Heart left ventricle (tissue), 16 donors: ENCODE measurements at regions of chr1 and their contacts with region 1.

Region 1: GRCh38 chr1:91885716-91886506 is at the start of gene TGFBR3:
- DNase-seq: peak; percentile 93 to 96 (median 95)
- ATAC-seq: peak; percentile 95 to 97 (median 96)
- H3K4me3 ChIP-seq: peak within 1 kb of the TSS; percentile 70 to 100 (median 92)
- H3K27ac ChIP-seq: peak within 1 kb of the TSS; percentile 85 to 98 (median 94)
- H3K4me1 ChIP-seq: peaks cover 0 to 42% (median 17%) of the 10 kb centered on the region in 12 donors
- H3K27me3 ChIP-seq: peaks cover 0 to 29% (median 0%) of the 10 kb centered on the region in 9 donors
- CTCF ChIP-seq: peak; percentile 26 to 74 (median 54)
- POLR2A ChIP-seq: peak in 1 of 2 donors; percentile 89
- total RNA-seq, gene TGFBR3: 10.3 to 51.8 (median 28.1) TPM

Region 2: GRCh38 chr1:91529856-91530255 is 356.1 kb before region 1 on chr1:
- intact Hi-C with region 1: loop called in 1 of 10 experiments (anchors 10 kb)
- DNase-seq: no peak
- ATAC-seq: peak in 2 of 4 donors; percentile 61 to 67
- H3K4me3 ChIP-seq: no peak overlapping the region
- H3K27ac ChIP-seq: no peak overlapping the region
- H3K4me1 ChIP-seq: peaks cover 0 to 9% (median 0%) of the 10 kb centered on the region in 12 donors
- H3K27me3 ChIP-seq: no peaks in the 10 kb centered on the region
- CTCF ChIP-seq: peak in 7 of 12 donors; percentile 21 to 58 (median 32)
- POLR2A ChIP-seq: no peak

Region 3: DNA sequence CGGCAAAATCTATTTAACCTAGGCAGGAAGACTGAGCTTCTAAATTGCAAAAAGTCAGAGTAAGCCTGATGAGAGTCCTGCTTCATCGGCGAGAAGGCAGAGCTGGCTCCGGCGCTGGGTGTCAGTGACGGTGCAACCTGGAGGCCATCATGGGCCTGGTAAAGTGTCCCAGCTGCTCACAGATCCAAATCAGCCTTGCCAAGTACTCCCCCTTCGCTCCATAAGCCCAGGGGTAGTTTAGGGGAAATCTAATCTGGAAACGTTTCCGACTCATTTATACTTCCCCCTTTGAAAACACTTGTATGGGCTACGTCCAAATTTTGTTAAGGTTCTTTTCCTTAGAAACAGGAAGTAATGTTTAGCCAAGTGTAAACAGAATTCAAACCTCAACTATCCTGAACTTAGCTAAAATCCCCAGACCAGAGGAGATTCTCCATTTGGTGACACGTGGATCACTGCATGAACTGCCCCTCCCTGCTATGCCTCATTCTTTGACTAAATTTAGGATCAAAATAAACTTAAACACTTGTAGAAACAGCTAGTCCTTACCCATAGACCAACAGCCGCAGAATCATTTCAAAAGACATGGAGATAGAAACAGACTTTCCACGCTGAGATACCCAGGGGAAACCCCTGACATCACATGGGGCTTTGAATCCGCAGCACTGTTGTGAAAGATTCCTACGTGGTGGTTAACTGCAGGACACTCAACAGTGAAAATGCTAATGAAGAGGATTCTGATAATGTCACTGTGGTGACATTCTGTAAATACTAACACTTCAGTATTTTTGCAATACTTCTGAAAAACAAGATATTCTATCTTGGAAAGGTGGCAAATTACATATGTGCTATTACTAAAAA is 172.7 kb before region 1 on chr1:
- intact Hi-C with region 1: loop called in 2 of 10 experiments (anchors 10 kb)
- DNase-seq: peak; percentile 48 to 80 (median 67)
- ATAC-seq: peak; percentile 73 to 85 (median 80)
- H3K4me3 ChIP-seq: peak overlapping the region in 7 of 12 donors; percentile 2 to 29 (median 11)
- H3K27ac ChIP-seq: peak overlapping the region; percentile 67 to 87 (median 81)
- H3K4me1 ChIP-seq: peaks cover 0 to 58% (median 22%) of the 10 kb centered on the region in 12 donors
- H3K27me3 ChIP-seq: no peaks in the 10 kb centered on the region
- CTCF ChIP-seq: no peak
- POLR2A ChIP-seq: no peak

Region 4: DNA sequence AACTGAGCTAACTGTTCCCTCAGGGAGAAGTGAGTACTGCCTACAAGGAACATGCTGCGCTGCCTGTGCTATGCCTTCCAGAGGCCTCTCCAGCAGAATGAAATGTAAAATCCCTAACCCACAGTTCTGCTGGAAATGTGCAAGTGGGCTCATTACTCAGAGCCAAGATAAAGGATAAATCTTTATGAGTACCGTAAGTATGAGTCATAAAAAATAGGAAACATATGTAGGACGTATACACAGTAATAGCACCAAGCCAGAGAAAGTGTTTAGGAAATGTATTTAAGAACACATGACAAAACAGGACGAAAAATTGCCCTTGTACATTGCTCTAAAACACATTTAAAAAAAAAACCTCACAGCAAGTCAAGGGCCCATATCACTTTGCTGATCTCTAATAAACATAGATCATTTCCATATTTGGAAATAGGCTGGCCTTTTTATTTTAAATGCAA is 104.5 kb before region 1 on chr1:
- intact Hi-C with region 1: loop called in 1 of 10 experiments (anchors 10 kb)
- DNase-seq: no peak
- ATAC-seq: no peak
- H3K4me3 ChIP-seq: no peak overlapping the region
- H3K27ac ChIP-seq: peak overlapping the region in 10 of 12 donors; percentile 9 to 65 (median 46)
- H3K4me1 ChIP-seq: peaks cover 0 to 63% (median 31%) of the 10 kb centered on the region in 12 donors
- H3K27me3 ChIP-seq: no peaks in the 10 kb centered on the region
- CTCF ChIP-seq: no peak
- POLR2A ChIP-seq: no peak

Region 5: DNA sequence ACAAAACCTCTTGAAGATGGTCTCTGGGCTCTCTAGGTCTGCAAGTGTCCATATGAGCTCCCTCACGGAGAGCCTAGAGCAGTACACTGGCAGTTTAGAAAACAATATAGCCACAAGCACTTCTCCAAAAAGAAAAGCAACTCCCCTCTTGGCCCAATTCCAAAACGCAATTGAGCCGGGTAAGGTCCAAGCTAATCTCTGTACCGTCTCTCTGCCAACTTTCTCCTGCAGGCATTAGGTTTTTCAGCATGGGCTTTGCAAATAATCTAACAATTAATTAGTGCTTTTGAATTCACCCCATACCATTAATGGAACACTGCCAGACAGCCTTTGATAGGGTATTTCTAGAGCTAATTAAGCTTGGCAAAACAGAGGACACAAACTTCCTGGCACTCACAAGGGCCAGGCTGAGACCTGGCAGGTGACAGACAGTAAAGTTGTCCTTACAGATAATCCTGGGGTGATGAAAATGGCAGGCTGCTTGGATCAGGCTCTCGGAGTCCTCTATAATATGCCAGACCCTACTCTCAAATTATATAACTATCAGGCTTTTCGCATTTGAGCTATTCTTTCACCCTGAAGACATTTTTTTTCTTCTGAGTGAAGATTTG is 39.8 kb before region 1 on chr1:
- intact Hi-C with region 1: loop called in 3 of 10 experiments (anchors 5 kb)
- DNase-seq: peak in 4 of 5 donors; percentile 58 to 76 (median 68)
- ATAC-seq: peak; percentile 69 to 82 (median 74)
- H3K4me3 ChIP-seq: peak overlapping the region in 1 of 12 donors; percentile 7
- H3K27ac ChIP-seq: peak overlapping the region; percentile 29 to 81 (median 68)
- H3K4me1 ChIP-seq: peaks cover 4 to 45% (median 29%) of the 10 kb centered on the region in 12 donors
- H3K27me3 ChIP-seq: no peaks in the 10 kb centered on the region
- CTCF ChIP-seq: no peak
- POLR2A ChIP-seq: no peak